SK-N-SH (cell line): ENCODE measurements at regions of chr4 and their contacts with region 1.

Region 1: GRCh38 chr4:153127760-153128494 is 76.3 kb upstream of the TRIM2 start:
- DNase-seq: peak; percentile 80
- H3K4me3 ChIP-seq: peak overlapping the region in 1 of 2 experiments; percentile 16; a peak in 1 of 4 replicates
- H3K27ac ChIP-seq: peak overlapping the region in 1 of 2 experiments; percentile 39; a peak in 1 of 4 replicates
- H3K4me1 ChIP-seq: no peaks in the 10 kb centered on the region; a peak in 1 of 4 replicates
- H3K27me3 ChIP-seq: no peaks in the 10 kb centered on the region
- CTCF ChIP-seq: peak; percentile 90
- EP300 ChIP-seq: no peak
- RAD21 ChIP-seq: peak; percentile 92

Region 2: GRCh38 chr4:152779513-152780266 is 348.2 kb before region 1 on chr4 and contains the starts of genes ARFIP1 and TIGD4:
- CTCF ChIA-PET with region 1: interaction called, 14 read pairs
- POLR2A ChIA-PET with region 1: no interaction called
- DNase-seq: peak; percentile 94
- H3K4me3 ChIP-seq: peak within 1 kb of the TSS; percentile 85 to 94
- H3K27ac ChIP-seq: peak within 1 kb of the TSS; percentile 90 to 92
- H3K4me1 ChIP-seq: peaks cover 11 to 19% of the 10 kb centered on the region in 2 experiments
- H3K27me3 ChIP-seq: no peaks in the 10 kb centered on the region
- CTCF ChIP-seq: peak; percentile 50
- EP300 ChIP-seq: 0 out of 4 replicates have a peak, but pooled peaks of 1 of the 2 experiments have one; percentile 5
- RAD21 ChIP-seq: peak; percentile 51
- polyA plus RNA-seq, gene ARFIP1: 15.7 and 17.4 TPM in 2 replicates
- polyA plus RNA-seq, gene TIGD4: 0.13 and 0.28 TPM in 2 replicates

Region 3: DNA sequence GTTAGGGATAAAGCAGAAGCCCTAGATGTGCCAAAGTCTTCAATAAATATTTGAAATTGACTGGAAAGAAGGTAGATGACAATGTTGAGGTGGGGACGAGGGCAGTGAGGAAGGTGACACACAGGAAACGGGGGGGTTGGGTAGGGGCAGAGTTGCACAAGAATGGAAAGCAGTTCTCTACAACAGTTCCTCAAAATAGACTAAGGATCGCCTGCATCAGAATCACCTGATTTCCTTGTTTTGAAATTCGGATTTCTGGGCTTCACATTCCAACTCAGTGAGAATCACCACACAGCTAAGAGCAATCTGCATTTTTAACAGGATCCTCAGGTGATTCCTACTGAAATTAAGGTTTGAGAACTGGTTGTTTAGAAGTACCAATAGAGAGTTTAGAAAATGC is 277.6 kb before region 1 on chr4:
- CTCF ChIA-PET with region 1: interaction called, 45 read pairs
- POLR2A ChIA-PET with region 1: no interaction called
- DNase-seq: no peak
- H3K4me3 ChIP-seq: no peak overlapping the region
- H3K27ac ChIP-seq: no peak overlapping the region
- H3K4me1 ChIP-seq: no peaks in the 10 kb centered on the region
- H3K27me3 ChIP-seq: no peaks in the 10 kb centered on the region
- CTCF ChIP-seq: no peak
- EP300 ChIP-seq: no peak
- RAD21 ChIP-seq: no peak

Region 4: DNA sequence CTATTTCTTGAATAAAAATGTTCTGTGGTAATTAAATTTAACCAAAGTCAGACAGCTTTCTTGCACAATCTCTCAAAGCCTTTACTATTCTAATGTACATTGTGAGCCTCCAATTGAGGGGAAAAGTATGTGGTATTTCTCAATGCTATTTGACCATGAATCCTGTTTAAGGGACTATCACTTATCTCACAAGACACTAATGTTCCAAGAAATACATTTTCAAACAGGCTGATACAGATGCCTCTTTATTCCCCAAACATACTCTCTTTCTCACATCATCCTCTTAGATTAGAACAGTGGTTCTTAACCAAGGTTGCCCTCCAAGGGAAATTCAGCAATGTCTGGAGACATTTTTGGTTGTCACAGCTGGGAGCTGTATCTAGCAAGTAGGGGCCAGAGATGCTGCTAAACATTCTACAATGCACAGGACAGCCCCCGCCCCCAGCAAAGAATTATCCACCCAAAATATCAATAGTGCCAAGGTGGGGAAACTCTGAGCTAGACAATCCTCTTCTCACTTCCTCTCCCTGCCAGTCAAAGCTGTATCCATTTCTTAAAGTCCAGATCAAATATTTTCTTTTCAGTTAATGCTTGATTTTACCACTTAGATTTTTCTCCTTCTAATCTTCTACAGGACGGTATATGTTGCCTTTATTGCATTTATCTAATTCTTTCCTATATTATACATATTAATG is 52.8 kb before region 1 on chr4:
- CTCF ChIA-PET with region 1: interaction called, 12 read pairs
- POLR2A ChIA-PET with region 1: no interaction called
- DNase-seq: no peak
- H3K4me3 ChIP-seq: no peak overlapping the region
- H3K27ac ChIP-seq: no peak overlapping the region
- H3K4me1 ChIP-seq: no peaks in the 10 kb centered on the region; a peak in 1 of 4 replicates
- H3K27me3 ChIP-seq: no peaks in the 10 kb centered on the region; the same call in 1 of the 2 replicates
- CTCF ChIP-seq: no peak
- EP300 ChIP-seq: no peak
- RAD21 ChIP-seq: no peak

Region 5: GRCh38 chr4:153089742-153090141 is 38.2 kb before region 1 on chr4:
- CTCF ChIA-PET with region 1: interaction called, 151 read pairs
- POLR2A ChIA-PET with region 1: no interaction called
- DNase-seq: no peak
- H3K4me3 ChIP-seq: no peak overlapping the region
- H3K27ac ChIP-seq: no peak overlapping the region
- H3K4me1 ChIP-seq: peaks cover 0 to 3% of the 10 kb centered on the region in 2 experiments; a peak in 1 of 4 replicates
- H3K27me3 ChIP-seq: 0 out of 2 replicates have a peak, but pooled peaks cover 5% of the 10 kb centered on the region
- CTCF ChIP-seq: no peak
- EP300 ChIP-seq: no peak
- RAD21 ChIP-seq: no peak

Region 6: GRCh38 chr4:153114771-153115321 is 13.1 kb before region 1 on chr4:
- CTCF ChIA-PET with region 1: interaction called, 28 read pairs
- POLR2A ChIA-PET with region 1: no interaction called
- DNase-seq: no peak
- H3K4me3 ChIP-seq: no peak overlapping the region
- H3K27ac ChIP-seq: peak overlapping the region in 1 of 2 experiments; percentile 38; a peak in 2 of 4 replicates
- H3K4me1 ChIP-seq: peaks cover 0 to 9% of the 10 kb centered on the region in 2 experiments; a peak in 3 of 4 replicates
- H3K27me3 ChIP-seq: no peaks in the 10 kb centered on the region
- CTCF ChIP-seq: no peak
- EP300 ChIP-seq: no peak
- RAD21 ChIP-seq: no peak